OCI-LY7 (cell line): ENCODE measurements at regions of chr4 and their contacts with region 1.

Region 1: DNA sequence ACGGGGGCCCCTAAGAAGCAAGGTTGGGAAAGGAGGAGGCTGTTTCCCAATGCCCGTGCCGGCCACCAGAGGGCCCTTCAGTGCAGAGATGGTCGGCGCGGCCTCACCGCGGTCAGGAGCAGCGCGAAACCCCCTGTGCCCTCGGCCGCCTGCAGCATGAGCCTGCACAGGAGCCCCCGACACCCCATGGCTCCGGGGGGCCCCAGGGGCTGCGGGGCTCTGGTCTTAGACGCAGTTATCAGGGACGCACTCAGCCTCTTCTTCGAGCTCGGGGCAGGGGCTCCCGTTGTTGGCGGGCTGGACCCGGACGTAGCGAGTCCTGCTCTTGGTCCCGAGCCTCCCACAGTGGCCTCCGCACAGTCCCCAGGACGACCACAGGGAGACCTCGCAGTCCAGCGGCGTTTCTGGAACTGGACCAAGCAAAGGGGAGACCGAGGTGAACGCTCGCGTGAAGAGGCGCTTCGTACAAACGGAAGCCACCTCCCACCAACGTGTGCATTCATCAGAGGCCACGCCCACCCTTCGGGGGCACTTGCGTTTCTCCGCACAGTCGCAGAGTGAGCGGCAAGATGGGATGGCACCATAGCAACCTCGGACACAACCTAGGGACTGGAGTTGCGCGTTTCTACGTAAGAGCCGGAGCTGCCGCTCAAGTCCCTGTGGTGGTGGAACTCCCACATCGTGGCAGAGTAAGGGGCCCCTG is 5.0 kb downstream of the SPON2 start:
- DNase-seq: peak; percentile 97
- H3K4me3 ChIP-seq: peak overlapping the region; percentile 75
- H3K27ac ChIP-seq: peak overlapping the region; percentile 54
- H3K4me1 ChIP-seq: peaks cover 18% of the 10 kb centered on the region
- CTCF ChIP-seq: peak; percentile 92

Region 2: DNA sequence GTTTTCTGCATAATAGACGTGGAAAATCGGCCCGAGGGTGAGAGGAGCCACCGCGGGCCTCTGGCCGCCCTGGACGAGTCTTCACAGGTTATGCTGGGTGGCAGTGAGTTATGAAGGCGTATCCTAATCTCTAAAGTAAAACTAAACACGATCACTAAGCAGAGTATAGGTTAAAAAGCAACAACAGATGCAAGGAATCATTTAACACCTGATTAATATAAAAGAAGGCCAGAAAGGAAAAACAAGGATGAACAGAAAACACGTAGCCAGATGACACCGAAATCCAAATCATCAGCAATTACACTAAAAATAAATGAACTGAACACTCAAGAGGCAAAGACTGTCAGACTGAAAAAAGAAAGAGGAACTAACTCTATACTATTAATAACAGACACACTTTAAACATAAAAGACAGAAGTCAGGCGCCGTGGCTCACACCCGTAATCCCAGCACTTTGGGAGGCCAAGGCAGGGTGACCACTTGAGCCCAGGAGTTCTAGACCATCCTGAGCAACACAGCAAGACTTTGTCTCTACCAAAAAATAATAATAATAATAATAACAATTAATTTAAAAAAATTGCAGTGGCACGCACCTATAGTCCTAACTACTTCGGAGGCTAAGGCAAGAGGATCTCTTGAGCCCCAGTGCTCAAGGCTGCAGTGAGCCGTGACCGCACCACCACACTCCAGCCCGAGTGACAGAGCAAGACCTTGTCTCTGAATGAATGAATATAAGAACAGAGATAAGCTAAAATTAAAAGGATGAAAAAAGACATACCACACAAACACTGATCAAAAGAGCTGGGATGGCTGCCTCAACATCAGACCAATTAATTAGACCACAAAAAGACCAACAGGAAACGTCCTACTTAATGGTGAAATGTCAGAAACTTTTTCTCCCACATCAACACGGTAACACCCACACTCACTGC is 51.5 kb after region 1 on chr4:
- CTCF ChIA-PET with region 1: interaction called, 3 read pairs
- POLR2A ChIA-PET with region 1: interaction called, 5 read pairs
- intact Hi-C with region 1: loop called (anchors 1 kb)
- DNase-seq: peak; percentile 86
- H3K4me3 ChIP-seq: peak overlapping the region; percentile 62
- H3K27ac ChIP-seq: peak overlapping the region; percentile 99
- H3K4me1 ChIP-seq: peaks cover 77% of the 10 kb centered on the region
- CTCF ChIP-seq: no peak

Region 3: GRCh38 chr4:1243451-1244080 is 76.2 kb after region 1 on chr4:
- CTCF ChIA-PET with region 1: no interaction called
- POLR2A ChIA-PET with region 1: no interaction called
- intact Hi-C with region 1: loop called (anchors 1 kb)
- DNase-seq: peak; percentile 51
- H3K4me3 ChIP-seq: no peak overlapping the region
- H3K27ac ChIP-seq: no peak overlapping the region
- H3K4me1 ChIP-seq: peaks cover 16% of the 10 kb centered on the region
- CTCF ChIP-seq: peak; percentile 74

Region 4: DNA sequence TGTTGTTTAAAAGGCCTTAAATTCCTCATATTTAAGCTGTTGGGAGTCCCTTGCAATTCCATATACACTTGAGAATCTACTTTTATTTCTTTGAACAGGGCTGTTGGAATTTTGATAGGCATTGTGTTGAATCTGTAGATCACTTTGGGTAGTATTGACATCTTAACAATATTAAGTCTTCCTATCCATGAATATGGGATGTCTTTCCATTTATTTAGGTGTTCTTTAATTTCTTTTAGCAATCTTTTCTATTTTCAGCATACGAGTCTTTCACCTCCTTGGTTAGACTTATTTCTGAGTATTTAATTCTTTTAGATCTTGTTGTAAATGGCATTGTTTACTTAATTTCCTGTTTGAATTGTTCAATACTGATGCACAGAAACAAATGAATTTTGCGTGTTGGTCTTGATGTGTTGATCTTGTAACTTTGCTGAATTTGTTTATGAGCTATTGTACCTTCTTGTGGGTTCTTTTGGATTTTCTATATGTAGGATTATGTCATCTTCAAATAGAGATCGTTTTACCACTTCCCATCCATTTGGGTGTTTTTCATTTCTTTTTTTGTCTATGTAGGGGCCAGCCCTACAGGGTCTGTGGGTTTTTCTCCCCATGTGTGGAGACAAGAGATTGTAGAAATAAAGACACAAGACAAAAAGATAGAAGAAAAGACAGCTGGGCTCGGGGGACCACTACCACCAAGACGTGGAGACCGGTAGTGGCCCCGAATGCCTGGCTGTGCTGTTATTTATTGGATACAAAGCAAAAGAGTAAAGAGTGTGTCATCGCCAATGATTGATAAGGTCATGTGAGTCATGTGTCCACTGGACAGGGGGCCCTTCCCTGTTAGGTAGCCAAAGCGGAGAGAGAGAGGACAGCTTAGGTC is 99.7 kb after region 1 on chr4:
- CTCF ChIA-PET with region 1: no interaction called
- POLR2A ChIA-PET with region 1: no interaction called
- intact Hi-C with region 1: loop called (anchors 1 kb)
- DNase-seq: no peak
- H3K4me3 ChIP-seq: peak overlapping the region; percentile 61
- H3K27ac ChIP-seq: peak overlapping the region; percentile 68
- H3K4me1 ChIP-seq: peaks cover 14% of the 10 kb centered on the region
- CTCF ChIP-seq: no peak